Body of pancreas (tissue), 4 donors: ENCODE measurements at regions of chr9 and their contacts with region 1.

Region 1: DNA sequence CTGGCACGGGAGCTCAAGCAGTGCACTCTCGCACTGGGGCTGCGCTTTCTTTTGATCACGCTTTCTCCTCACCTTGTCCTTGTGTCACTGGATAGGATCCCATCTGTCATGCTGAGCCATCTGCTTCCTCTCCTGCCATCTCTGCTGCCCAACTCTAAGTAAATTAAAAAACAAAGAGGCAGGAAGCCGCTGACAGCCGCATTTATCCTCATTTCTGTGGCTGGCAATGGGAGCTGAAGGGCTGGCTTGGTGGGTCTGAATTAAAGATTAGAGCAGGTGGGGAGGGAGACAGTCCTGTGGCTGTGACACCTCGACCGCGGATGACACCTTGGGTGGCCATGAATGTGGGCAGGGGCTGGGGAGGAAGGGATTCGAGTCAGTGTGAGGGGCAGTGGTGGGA is 159.2 kb upstream of the ALDH1B1 start:
- DNase-seq: no peak
- ATAC-seq: no peak
- H3K4me3 ChIP-seq: no peak overlapping the region
- H3K27ac ChIP-seq: no peak overlapping the region
- H3K4me1 ChIP-seq: no peaks in the 10 kb centered on the region
- H3K27me3 ChIP-seq: no peaks in the 10 kb centered on the region
- CTCF ChIP-seq: no peak
- POLR2A ChIP-seq: no peak

Region 2: DNA sequence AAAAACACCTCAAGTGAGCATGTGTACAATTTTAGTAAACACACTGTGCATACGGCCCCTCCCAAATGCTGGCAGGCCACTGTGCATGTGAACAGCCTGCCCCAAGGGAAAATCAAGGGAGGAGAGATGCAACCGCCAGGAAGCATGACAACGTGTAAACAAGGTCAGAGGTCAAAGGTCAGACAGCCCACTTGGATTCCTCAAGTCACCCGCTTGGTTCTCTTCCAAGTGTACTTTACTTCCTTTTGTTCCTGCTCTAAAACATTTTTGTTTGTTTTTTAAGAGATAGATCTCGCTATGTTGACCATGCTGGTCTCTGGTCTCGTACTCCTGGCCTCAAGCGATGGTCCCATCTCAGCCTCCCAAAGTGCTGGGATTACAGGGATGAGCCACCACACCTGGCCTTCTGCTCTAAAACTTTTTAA is 37.6 kb before region 1 on chr9:
- intact Hi-C with region 1: no loop called
- DNase-seq: peak in 3 of 4 donors; percentile 25 to 49 (median 30)
- ATAC-seq: no peak
- H3K4me3 ChIP-seq: no peak overlapping the region
- H3K27ac ChIP-seq: no peak overlapping the region
- H3K4me1 ChIP-seq: peaks cover 10% of the 10 kb centered on the region
- H3K27me3 ChIP-seq: no peaks in the 10 kb centered on the region
- CTCF ChIP-seq: no peak
- POLR2A ChIP-seq: no peak

Region 3: GRCh38 chr9:38284588-38285051 is 51.3 kb after region 1 on chr9:
- intact Hi-C with region 1: loop called (anchors 5 kb)
- DNase-seq: no peak
- ATAC-seq: no peak
- H3K4me3 ChIP-seq: no peak overlapping the region
- H3K27ac ChIP-seq: no peak overlapping the region
- H3K4me1 ChIP-seq: peaks cover 10% of the 10 kb centered on the region
- H3K27me3 ChIP-seq: no peaks in the 10 kb centered on the region
- CTCF ChIP-seq: no peak
- POLR2A ChIP-seq: no peak

Region 4: DNA sequence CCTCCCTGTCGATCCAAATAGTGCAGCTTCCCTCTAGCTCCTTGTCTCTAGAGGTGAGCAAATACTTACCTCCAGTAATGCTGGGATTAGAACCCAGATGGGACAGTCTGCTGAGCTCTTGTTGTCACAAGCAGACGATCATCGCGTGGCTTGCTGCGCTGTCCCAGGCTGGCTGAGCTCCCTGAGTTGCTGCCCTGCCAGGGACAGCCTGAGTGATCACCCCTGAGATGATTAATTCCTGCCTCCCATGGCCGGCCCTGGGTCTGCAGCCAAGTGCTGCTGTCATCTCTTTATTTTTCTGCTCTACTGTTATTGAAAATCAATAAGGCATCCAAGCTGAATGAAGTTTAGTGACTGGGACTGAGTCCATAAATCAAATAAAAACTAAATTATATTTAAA is 65.2 kb after region 1 on chr9:
- intact Hi-C with region 1: no loop called
- DNase-seq: peak in 2 of 4 donors; percentile 17 to 40
- ATAC-seq: peak; percentile 62
- H3K4me3 ChIP-seq: no peak overlapping the region
- H3K27ac ChIP-seq: peak overlapping the region in 1 of 4 donors; percentile 17
- H3K4me1 ChIP-seq: peaks cover 18% of the 10 kb centered on the region
- H3K27me3 ChIP-seq: no peaks in the 10 kb centered on the region
- CTCF ChIP-seq: no peak
- POLR2A ChIP-seq: no peak

Region 5: DNA sequence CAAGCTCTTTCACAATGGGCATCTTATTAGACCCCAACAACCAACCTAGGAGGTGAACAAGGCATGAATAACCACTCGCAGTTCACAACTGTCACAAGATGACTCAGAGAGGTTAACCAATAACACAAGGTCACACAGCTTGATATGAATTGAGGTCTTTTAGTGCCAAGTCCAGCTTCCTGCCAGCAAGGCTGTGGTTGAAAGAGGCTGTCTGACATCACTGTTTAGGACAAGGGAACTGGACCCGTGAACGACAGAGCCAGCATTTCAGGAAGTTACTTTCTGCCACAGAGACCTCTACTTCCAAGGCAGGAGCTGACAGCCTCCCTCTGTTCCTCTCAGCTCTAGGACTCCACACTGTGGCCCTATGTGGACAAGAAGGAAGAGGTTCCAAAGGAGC is 105.7 kb after region 1 on chr9:
- intact Hi-C with region 1: no loop called
- DNase-seq: peak; percentile 68 to 88 (median 76)
- ATAC-seq: peak; percentile 90
- H3K4me3 ChIP-seq: no peak overlapping the region
- H3K27ac ChIP-seq: peak overlapping the region; percentile 21 to 73 (median 59)
- H3K4me1 ChIP-seq: peaks cover 40% of the 10 kb centered on the region
- H3K27me3 ChIP-seq: no peaks in the 10 kb centered on the region
- CTCF ChIP-seq: peak in 4 of 7 experiments; percentile 18 to 32 (median 24)
- POLR2A ChIP-seq: no peak

Region 6: DNA sequence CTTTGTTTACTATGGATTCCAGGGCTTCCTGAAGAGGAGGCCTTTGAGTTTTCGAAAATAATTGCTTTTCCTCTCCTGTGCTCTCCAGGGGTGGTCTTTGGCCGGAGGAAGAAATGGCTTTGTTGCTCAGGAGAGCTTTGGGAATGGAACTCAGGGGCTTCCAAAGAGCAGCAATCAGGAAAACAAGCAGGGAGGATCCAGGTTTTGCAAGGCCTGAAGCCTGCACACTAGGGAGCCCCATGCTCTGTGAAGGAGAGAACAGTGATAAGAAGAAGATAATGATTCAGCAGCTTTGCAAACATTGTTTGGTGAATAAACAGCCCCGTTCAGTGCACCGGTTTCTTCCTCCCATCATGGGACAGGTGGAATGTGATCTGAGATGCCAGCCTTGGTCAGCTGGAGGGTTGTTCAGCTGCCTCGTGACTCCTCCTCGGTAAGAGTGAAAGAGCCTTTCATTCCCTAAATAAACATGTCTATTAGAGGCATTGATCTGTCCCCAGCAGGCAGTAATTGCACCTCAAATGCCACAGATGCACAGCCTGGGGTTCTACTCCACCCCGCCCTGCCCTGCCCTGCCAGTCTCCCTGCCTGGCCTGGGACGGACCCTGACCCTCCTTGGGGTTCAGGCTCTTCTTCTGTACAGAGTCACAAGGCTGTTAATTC is 147.7 kb after region 1 on chr9:
- intact Hi-C with region 1: no loop called
- DNase-seq: peak; percentile 23 to 71 (median 55)
- ATAC-seq: peak; percentile 77
- H3K4me3 ChIP-seq: no peak overlapping the region
- H3K27ac ChIP-seq: peak overlapping the region; percentile 25 to 80 (median 66)
- H3K4me1 ChIP-seq: peaks cover 19% of the 10 kb centered on the region
- H3K27me3 ChIP-seq: no peaks in the 10 kb centered on the region
- CTCF ChIP-seq: no peak
- POLR2A ChIP-seq: no peak